Right lobe of liver (tissue), 6 donors: ENCODE measurements at regions of chr22 and their contacts with region 1.

Region 1: DNA sequence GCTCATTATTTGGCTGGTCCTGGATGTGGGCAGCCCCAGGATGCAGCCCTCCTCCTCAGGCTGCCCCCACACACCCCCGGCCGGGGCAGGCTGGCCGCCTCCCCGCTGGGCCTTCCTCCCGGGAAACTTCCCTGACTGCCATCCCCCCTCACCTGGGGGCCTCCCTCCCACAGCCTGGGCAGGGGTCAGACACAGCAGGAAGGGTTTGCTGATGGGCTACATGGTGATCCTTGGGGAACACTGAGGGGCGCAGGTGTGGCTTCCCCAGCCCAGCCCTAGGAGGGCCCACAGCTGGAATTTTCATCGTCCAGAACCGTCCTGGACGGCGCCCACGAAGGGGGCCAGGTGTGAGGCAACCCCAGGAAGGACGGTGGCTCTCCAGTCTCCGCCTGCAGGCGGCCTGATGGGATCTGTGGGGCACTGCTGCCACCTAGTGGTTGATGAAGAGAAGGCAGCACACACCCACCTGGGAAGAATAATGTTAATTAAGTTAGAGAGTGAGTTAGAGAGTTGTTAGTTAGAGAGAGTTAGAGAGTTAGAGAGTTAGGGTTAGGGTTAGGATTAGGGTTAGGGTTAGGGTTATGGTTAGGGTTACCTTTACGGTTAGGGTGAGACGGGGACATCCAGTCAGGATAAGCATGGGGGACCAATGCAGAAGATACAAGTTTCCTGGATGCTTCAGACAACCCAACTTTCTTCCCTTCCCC is 75.9 kb upstream of the PRR5 start:
- DNase-seq: peak; percentile 69 to 78 (median 70)
- ATAC-seq: peak; percentile 80 to 96 (median 90)
- H3K4me3 ChIP-seq: no peak overlapping the region
- H3K27ac ChIP-seq: no peak overlapping the region
- H3K4me1 ChIP-seq: no peaks in the 10 kb centered on the region
- H3K27me3 ChIP-seq: no peaks in the 10 kb centered on the region
- CTCF ChIP-seq: peak; percentile 96 to 99 (median 97)
- POLR2A ChIP-seq: no peak

Region 2: DNA sequence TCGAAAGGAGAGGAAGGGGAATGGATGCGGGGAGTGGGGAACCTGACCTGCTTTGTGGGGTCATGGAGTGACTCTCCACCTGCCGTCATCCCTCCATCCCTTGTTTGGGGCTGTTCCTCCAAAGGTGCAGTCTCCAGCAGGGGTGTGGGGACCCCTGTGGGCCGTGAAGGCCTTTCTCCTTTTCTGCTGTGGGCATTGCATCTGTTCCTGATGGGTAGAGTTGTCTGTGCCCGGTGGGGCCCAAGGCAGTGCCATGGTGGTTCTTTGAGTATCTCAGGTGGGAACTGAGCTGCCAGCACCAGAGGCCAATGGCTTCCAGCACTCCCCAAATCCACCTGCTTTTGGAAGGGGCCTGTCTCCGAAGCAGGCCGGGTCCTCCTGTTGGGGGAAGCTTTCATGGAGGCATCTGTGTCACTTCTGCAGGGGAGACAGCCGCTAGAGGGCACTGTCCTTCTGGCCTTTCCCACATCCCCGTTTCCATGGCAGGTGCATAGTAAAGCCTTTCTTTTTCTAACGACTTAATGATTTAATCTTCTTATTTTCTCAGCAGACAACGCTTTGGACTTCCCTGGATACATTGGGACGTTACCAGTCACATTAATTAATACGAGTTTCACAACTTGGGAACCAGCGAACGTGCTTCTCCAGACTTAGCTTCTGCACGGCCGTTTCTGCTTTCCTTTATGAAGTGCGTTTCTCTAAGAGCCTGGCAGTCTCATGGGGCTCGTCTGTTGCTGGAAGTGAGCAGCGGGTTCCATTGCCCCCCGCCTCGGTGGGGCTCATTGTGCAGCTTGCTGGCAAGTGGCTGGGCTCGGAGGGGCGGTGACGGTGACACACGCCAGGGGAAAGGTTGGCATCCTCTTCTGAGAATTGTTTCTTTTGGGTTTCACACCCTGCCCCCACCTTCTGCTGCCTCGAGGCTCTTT is 544.9 kb before region 1 on chr22:
- intact Hi-C with region 1: loop called in 1 of 2 experiments (anchors 10 kb)
- DNase-seq: peak; percentile 69 to 74 (median 69)
- ATAC-seq: peak; percentile 65 to 80 (median 66)
- H3K4me3 ChIP-seq: no peak overlapping the region
- H3K27ac ChIP-seq: no peak overlapping the region
- H3K4me1 ChIP-seq: no peaks in the 10 kb centered on the region
- H3K27me3 ChIP-seq: no peaks in the 10 kb centered on the region
- CTCF ChIP-seq: peak; percentile 59 to 92 (median 87)
- POLR2A ChIP-seq: no peak